GM13976 (cell line): ENCODE measurements at regions of chr2 and their contacts with region 1.

Region 1: DNA sequence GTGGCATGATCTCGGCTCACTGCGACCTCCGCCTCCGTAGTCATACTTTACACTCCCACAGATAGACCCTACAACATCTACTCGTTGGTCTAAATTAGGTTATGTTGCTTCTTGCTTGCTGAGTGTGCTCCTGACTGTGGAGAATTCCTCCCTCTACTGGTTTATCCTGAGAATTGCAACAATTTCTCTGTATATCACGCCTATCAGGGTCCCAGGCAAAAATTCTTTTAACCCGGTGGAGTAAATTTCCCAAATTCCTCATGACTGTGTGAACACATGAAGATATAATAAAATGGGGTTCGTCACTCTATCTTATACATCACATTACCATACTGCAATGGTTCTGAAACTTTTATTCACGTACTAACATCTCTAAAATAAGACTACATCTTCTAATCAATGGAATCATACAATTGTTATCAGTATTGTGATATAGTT is 156.7 kb downstream of the EVA1A start:
- DNase-seq: peak; percentile 9
- CTCF ChIP-seq: peak; percentile 54

Region 2: DNA sequence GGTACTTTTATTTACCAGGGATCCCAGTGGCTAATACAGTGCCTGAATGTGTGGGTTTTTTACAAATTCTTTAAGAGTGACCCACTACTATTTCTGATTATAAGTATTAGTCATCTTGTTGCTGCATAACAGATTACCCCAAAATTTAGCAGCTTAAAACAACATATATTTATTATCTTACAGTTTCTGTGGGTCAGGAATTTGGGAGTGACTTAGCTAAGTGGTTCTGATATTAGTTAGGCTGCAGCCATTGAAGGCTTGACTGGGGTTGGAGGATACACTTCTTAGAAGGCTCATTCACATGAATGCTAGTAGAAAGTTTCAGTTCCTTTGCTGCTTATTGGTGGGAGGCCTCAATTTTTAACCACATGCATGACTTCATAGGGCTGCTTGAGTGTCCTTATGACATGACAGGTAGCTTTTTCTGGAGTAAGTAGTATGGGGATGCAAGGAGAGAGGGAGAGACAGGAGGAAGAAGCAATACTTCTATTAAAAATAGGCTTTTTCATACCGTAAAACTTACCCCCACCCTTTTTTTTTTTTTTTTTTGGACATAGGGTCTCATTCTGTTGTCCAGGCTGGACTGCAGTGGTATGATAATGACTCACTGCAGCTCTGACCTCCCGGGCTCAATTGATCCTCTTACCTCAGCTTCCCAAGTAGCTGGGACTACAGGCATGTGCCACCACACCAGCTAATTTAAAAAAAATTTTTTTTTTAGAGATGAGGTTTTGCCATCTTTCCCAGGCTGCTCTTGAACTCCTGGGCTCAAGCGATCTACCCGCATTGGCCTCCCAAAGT is 458.8 kb before region 1 on chr2:
- in situ Hi-C with region 1: loop called (anchors 25 kb)
- DNase-seq: peak; percentile 65
- CTCF ChIP-seq: no peak

Region 3: GRCh38 chr2:75311993-75312392 is 92.0 kb before region 1 on chr2:
- in situ Hi-C with region 1: loop called (anchors 25 kb)
- DNase-seq: peak; percentile 69
- CTCF ChIP-seq: peak; percentile 60